Activated CD4-positive, alpha-beta memory T cell treated with anti-CD3 and anti-CD28 coated beads, Interleukin-2, amount 10 ng/mL, durations not matched to agents 7 days and 5 days (primary cell): ENCODE measurements at regions of chr1 and their contacts with region 1.

Region 1: DNA sequence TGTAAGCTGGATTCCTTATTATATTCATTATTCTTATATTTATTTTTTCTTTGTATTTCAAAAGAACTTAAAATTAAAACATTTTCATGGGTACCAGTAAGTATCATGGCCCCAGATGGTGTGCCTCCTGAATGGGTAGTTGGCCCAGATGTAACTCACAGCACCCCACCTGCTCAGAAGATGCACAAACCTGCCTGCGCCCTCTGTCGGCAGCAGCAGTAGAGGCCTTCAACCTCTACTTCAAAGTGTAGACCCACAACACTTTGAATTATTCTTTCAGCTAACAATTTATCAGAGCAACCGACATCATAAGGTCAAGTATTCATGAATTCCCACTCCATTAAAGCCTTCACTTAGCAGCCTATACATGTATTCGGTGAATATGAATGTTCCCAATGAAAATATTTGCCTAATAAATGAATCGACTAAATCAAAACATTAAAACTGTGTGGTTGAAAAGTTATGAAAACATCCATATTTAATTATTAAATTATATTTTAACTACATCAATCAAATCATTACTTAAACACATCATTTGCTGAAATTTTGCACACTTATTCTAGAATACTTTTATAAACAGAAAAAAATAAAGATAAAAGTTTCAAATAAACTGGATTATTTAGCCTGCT is 25.4 kb downstream of the PIGM start:
- DNase-seq: peak; percentile 79
- H3K4me3 Mint-ChIP-seq: no peak overlapping the region
- H3K27ac Mint-ChIP-seq: no peak overlapping the region
- H3K4me1 Mint-ChIP-seq: no peaks in the 10 kb centered on the region
- H3K27me3 Mint-ChIP-seq: peaks cover 9% of the 10 kb centered on the region

Region 2: GRCh38 chr1:159780583-159781582 is 225.5 kb before region 1 on chr1 and contains the start of gene DUSP23:
- CTCF ChIA-PET with region 1: interaction called, 12 read pairs
- POLR2A ChIA-PET with region 1: no interaction called
- DNase-seq: peak; percentile 97
- H3K4me3 Mint-ChIP-seq: peak within 1 kb of the TSS; percentile 79
- H3K27ac Mint-ChIP-seq: peak within 1 kb of the TSS; percentile 44
- H3K4me1 Mint-ChIP-seq: peaks cover 34% of the 10 kb centered on the region
- H3K27me3 Mint-ChIP-seq: no peaks in the 10 kb centered on the region
- total RNA-seq, gene DUSP23: 22.7 to 24.6 TPM

Region 3: DNA sequence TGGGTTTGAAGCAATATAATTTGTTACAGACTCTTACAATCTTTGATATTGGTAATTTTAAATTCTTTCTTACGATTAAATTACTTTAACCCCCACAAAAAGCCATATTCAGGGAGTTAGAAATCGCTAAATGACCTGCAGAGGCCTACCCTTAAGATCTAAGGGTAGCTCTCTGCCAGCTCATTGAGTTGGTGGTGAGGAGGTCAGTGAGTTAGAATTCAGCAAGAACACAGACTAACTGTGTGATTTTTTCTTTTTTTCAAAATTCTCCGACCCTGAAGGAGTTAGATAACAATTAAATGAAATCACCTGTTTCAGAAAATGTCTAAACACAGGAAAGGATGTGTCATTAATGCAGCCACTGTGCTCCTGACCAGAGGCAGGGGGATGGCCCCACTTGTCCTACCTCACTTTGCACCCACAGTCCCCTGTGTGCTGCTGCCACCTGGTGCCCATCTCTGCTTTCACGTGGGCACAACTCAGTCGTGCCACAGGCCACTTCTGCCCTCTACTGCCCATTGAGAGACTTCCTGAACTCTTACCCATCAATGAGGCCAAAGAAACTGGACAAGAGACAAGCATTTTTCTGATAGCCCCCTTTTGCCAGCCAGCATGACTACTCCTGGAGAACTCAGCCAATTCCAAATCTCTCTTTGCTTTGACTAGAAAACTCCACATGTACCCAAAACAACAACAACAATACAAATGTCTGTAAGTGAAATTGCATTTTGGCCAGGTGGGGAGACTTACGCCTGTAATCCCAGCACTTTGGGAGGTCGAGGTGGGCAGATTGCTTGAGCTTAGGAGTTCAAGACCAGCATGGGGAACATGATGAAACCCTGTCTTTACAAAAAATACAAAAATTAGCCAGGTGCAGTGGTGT is 114.9 kb before region 1 on chr1:
- CTCF ChIA-PET with region 1: interaction called, 90 read pairs
- POLR2A ChIA-PET with region 1: no interaction called
- DNase-seq: peak; percentile 82
- H3K4me3 Mint-ChIP-seq: no peak overlapping the region
- H3K27ac Mint-ChIP-seq: no peak overlapping the region
- H3K4me1 Mint-ChIP-seq: peaks cover 19% of the 10 kb centered on the region
- H3K27me3 Mint-ChIP-seq: peaks cover 12% of the 10 kb centered on the region

Region 4: DNA sequence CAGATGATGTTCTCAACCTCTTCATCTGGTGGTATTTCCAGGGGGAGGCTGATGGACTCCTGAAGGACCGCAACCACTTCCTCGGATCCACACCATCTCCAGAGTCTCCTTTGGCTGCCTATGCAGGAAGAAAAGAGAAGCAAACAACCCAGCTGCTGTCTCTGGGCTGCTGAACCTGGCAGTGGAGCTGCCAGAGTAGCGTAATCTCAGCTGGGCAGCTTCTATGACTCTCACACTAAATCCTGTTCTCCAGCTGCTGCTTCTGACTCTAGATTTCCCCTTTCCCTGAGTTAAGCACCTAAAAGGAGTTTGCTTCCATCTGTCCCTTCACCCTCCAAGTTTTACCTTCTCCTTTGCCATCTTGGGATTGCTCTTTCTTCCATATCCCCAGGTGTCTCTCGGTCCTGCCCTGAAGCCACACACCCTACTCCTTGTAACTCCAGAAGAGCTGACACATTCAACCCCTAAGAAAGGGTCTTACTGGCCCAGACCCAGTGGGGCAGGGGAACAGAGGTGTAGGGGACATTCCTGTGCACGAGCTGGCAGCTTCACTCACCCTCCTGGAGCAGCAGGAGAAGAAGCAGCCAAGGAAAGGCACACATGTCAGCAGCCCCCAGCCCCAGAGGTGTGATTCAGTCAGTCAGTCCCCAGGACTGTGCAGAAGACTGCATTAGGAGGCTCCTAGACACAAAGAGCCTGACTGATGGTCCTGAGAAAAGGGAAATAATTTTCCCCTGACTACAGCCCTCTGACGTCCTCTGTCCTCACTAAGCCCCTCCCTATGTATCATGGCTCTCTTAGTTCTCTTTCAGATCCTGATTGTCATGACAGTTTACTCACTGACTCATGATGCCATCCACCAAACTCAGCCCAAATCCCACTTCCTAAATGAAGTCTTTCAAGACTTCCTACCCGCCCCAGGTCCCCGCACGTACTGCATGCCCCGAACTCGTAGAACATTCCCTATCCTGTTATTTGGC is 52.6 kb before region 1 on chr1 and contains the start of gene SLAMF9:
- CTCF ChIA-PET with region 1: interaction called, 15 read pairs
- POLR2A ChIA-PET with region 1: no interaction called
- DNase-seq: no peak
- H3K4me3 Mint-ChIP-seq: no peak within 1 kb of the TSS
- H3K27ac Mint-ChIP-seq: no peak within 1 kb of the TSS
- H3K4me1 Mint-ChIP-seq: peaks cover 7% of the 10 kb centered on the region
- H3K27me3 Mint-ChIP-seq: peaks cover 42% of the 10 kb centered on the region
- total RNA-seq, gene SLAMF9: not detected

Region 5: DNA sequence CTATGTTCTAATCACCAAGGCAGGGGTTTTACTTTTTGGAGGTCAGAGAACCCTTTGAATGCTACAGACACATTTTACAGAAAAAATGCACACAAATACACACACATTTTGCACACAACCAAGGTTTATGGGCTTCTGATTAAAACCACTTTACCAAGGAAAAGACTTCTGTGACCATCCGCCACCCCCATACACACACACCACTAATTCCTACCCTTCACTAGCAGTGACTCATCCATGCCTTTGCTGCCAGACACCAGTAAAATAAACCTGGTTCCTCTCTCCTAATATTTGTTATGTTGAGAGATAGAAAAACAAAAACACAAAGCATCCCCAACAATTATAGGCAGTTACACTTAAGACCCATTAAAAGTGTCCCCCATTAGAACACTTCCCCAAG is 12.5 kb after region 1 on chr1:
- CTCF ChIA-PET with region 1: interaction called, 47 read pairs
- POLR2A ChIA-PET with region 1: no interaction called
- DNase-seq: no peak
- H3K4me3 Mint-ChIP-seq: no peak overlapping the region
- H3K27ac Mint-ChIP-seq: peak overlapping the region; percentile 33
- H3K4me1 Mint-ChIP-seq: peaks cover 25% of the 10 kb centered on the region
- H3K27me3 Mint-ChIP-seq: peaks cover 10% of the 10 kb centered on the region

Region 6: GRCh38 chr1:160078512-160079195 is 72.2 kb after region 1 on chr1:
- CTCF ChIA-PET with region 1: interaction called, 20 read pairs
- POLR2A ChIA-PET with region 1: no interaction called
- DNase-seq: peak; percentile 71
- H3K4me3 Mint-ChIP-seq: no peak overlapping the region
- H3K27ac Mint-ChIP-seq: no peak overlapping the region
- H3K4me1 Mint-ChIP-seq: no peaks in the 10 kb centered on the region
- H3K27me3 Mint-ChIP-seq: peaks cover 63% of the 10 kb centered on the region

Region 7: DNA sequence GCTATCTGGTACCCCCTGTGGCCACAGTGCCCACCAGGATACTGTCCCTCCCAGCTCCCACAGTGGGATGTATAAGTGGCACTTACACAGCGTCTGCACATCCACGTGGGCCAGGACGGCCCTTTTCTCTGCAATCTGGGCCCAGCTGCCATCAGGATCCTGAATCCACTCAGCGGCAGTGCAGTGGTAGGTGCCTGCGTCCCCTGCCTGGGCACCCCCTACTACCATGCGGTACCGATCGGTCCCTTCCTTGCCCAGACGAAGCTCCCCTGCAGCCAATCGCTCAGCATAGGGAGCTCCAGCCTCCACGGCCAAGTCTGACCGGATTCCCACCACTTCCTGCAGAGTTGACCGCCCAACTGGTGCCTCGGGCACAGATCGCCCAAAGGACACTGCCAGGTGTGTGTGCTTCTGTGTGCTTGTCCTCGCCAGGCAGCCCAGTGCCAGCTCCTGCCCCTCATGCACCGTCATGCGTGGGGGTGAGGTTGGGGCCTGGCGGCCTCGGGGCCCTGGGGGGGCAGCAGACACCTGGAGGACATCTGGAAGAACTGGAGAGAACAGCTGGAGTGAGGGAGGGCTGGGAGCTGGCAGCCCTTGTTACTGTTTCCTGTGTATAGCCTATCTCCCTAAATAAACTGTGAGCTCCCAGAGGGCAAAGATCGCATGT is 87.3 kb after region 1 on chr1:
- CTCF ChIA-PET with region 1: no interaction called
- POLR2A ChIA-PET with region 1: no interaction called
- DNase-seq: no peak
- H3K4me3 Mint-ChIP-seq: no peak overlapping the region
- H3K27ac Mint-ChIP-seq: no peak overlapping the region
- H3K4me1 Mint-ChIP-seq: peaks cover 26% of the 10 kb centered on the region
- H3K27me3 Mint-ChIP-seq: no peaks in the 10 kb centered on the region